GM12878 (cell line): ENCODE measurements at regions of chrX and their contacts with region 1.

Region 1: GRCh38 chrX:107672955-107673378 is 44.7 kb downstream of the PRPS1 start:
- DNase-seq: no peak
- ATAC-seq: peak; percentile 61
- H3K4me3 ChIP-seq: no peak overlapping the region
- H3K27ac ChIP-seq: peak overlapping the region; percentile 57
- H3K4me1 ChIP-seq: peaks cover 16% of the 10 kb centered on the region
- H3K27me3 ChIP-seq: no peaks in the 10 kb centered on the region
- CTCF ChIP-seq: peak; percentile 72 to 80 (median 73)
- EP300 ChIP-seq: no peak
- POLR2A ChIP-seq: no peak
- RAD21 ChIP-seq: peak; percentile 74

Region 2: GRCh38 chrX:107118322-107119147 is 554.4 kb before region 1 on chrX and contains the start of gene RBM41:
- CTCF ChIA-PET with region 1: no interaction called
- POLR2A ChIA-PET with region 1: no interaction called
- RAD21 ChIA-PET with region 1: no interaction called
- SMC1A ChIA-PET with region 1: no interaction called
- in situ Hi-C with region 1: no loop called
- intact Hi-C with region 1: loop called (anchors 5 kb)
- DNase-seq: peak; percentile 31
- ATAC-seq: peak; percentile 100
- H3K4me3 ChIP-seq: peak within 1 kb of the TSS; percentile 55
- H3K27ac ChIP-seq: peak within 1 kb of the TSS; percentile 83
- H3K4me1 ChIP-seq: no peaks in the 10 kb centered on the region
- H3K27me3 ChIP-seq: no peaks in the 10 kb centered on the region
- CTCF ChIP-seq: no peak
- EP300 ChIP-seq: no peak
- POLR2A ChIP-seq: no peak; the same call in 1 of the 2 replicates
- RAD21 ChIP-seq: no peak
- polyA plus RNA-seq, gene RBM41: 7.7 to 9.1 TPM

Region 3: DNA sequence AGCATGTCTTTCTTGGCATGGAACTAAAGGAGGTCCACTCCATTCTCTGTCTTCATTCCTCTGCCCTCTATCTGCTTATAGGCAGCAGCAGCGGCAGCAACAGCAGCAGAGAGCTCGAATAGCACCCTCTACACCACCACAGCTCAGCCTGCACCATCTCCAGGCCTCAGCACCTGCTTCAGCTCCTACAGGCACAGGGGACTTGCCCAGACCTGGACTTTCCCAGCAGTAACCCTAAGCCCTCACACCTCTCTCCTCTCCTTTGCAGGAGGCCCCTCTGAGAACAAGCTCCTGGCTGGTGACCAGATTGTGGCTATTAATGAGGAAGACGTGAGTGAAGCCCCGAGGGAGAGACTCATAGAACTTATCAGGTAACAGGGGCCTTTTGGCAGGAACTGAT is 142.8 kb before region 1 on chrX:
- CTCF ChIA-PET with region 1: no interaction called
- POLR2A ChIA-PET with region 1: no interaction called
- RAD21 ChIA-PET with region 1: no interaction called
- SMC1A ChIA-PET with region 1: no interaction called
- in situ Hi-C with region 1: no loop called
- intact Hi-C with region 1: no loop called
- DNase-seq: no peak
- ATAC-seq: peak; percentile 57
- H3K4me3 ChIP-seq: no peak overlapping the region
- H3K27ac ChIP-seq: no peak overlapping the region
- H3K4me1 ChIP-seq: no peaks in the 10 kb centered on the region
- H3K27me3 ChIP-seq: no peaks in the 10 kb centered on the region; a peak in 2 of 4 replicates
- CTCF ChIP-seq: no peak
- EP300 ChIP-seq: no peak
- POLR2A ChIP-seq: no peak
- RAD21 ChIP-seq: no peak

Region 4: GRCh38 chrX:107684956-107685385 is 12.0 kb after region 1 on chrX:
- CTCF ChIA-PET with region 1: interaction called, 13 read pairs
- POLR2A ChIA-PET with region 1: interaction called, 10 read pairs
- RAD21 ChIA-PET with region 1: interaction called, 17 read pairs
- SMC1A ChIA-PET with region 1: interaction called, 51 read pairs
- in situ Hi-C with region 1: no loop called
- intact Hi-C with region 1: no loop called
- DNase-seq: no peak
- ATAC-seq: peak; percentile 92
- H3K4me3 ChIP-seq: no peak overlapping the region
- H3K27ac ChIP-seq: 0 out of 2 replicates have a peak overlapping the region, but pooled peaks have one; percentile 27
- H3K4me1 ChIP-seq: peaks cover 18% of the 10 kb centered on the region
- H3K27me3 ChIP-seq: no peaks in the 10 kb centered on the region
- CTCF ChIP-seq: no peak
- EP300 ChIP-seq: no peak
- POLR2A ChIP-seq: no peak
- RAD21 ChIP-seq: no peak

Region 5: DNA sequence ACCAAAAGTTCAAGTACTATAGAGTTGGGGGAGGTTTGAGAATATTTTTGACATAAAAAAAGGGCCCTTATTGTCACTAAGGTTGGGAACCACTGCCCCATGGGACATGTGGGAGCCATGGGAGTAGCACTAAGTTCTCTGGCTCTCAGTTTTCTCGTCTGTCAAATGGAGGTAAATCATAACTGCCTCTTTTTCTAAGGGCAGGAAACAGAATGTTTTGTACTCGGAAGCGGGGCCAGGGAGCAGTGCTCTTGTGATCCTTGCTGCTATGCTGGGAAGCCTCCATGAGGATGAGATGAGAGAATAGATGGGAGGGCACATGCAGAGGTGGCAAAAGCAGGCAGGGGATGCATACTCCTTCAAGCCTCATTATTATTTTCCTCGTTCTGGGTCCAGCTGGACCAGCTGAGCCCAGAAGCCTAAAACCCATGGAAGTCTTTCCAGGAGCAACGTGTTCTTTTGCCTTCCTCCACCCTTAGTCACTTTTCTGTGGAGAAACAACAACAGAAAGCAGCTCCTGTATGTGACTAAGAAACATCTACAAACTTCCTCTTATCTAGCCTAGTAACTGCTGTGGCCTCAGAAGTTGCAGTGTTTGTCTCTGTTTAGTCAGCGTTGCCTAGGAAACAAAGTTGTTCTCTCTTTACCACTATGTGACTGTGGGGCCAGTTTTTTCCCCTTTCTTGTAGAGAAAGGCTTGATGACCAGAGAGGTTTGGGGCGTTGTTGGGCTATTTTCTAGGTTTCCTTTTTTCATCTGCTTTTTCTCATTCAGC is 37.8 kb after region 1 on chrX:
- CTCF ChIA-PET with region 1: interaction called, 273 read pairs
- POLR2A ChIA-PET with region 1: interaction called, 287 read pairs
- RAD21 ChIA-PET with region 1: interaction called, 444 read pairs
- SMC1A ChIA-PET with region 1: interaction called, 425 read pairs
- in situ Hi-C with region 1: loop called (anchors 5 kb)
- intact Hi-C with region 1: loop called (anchors 1 kb)
- DNase-seq: peak; percentile 87
- ATAC-seq: peak; percentile 74
- H3K4me3 ChIP-seq: peak overlapping the region; percentile 51; the same call in 1 of the 2 replicates
- H3K27ac ChIP-seq: peak overlapping the region; percentile 83
- H3K4me1 ChIP-seq: peaks cover 15% of the 10 kb centered on the region
- H3K27me3 ChIP-seq: no peaks in the 10 kb centered on the region
- CTCF ChIP-seq: no peak
- EP300 ChIP-seq: peak; percentile 66 to 97
- POLR2A ChIP-seq: no peak
- RAD21 ChIP-seq: no peak

Region 6: GRCh38 chrX:107741404-107741790 is 68.4 kb after region 1 on chrX:
- CTCF ChIA-PET with region 1: interaction called, 11 read pairs
- POLR2A ChIA-PET with region 1: interaction called, 5 read pairs
- RAD21 ChIA-PET with region 1: interaction called, 4 read pairs
- SMC1A ChIA-PET with region 1: interaction called, 3 read pairs
- in situ Hi-C with region 1: no loop called
- intact Hi-C with region 1: no loop called
- DNase-seq: no peak
- ATAC-seq: no peak
- H3K4me3 ChIP-seq: peak overlapping the region; percentile 32; the same call in 1 of the 2 replicates
- H3K27ac ChIP-seq: no peak overlapping the region
- H3K4me1 ChIP-seq: peaks cover 6% of the 10 kb centered on the region
- H3K27me3 ChIP-seq: no peaks in the 10 kb centered on the region; a peak in 1 of 4 replicates
- CTCF ChIP-seq: no peak
- EP300 ChIP-seq: no peak
- POLR2A ChIP-seq: no peak
- RAD21 ChIP-seq: no peak